Activated CD4-positive, alpha-beta T cell treated with anti-CD3 and anti-CD28 coated beads for 36 hours (primary cell): ENCODE measurements at regions of chr7 and their contacts with region 1.

Region 1: DNA sequence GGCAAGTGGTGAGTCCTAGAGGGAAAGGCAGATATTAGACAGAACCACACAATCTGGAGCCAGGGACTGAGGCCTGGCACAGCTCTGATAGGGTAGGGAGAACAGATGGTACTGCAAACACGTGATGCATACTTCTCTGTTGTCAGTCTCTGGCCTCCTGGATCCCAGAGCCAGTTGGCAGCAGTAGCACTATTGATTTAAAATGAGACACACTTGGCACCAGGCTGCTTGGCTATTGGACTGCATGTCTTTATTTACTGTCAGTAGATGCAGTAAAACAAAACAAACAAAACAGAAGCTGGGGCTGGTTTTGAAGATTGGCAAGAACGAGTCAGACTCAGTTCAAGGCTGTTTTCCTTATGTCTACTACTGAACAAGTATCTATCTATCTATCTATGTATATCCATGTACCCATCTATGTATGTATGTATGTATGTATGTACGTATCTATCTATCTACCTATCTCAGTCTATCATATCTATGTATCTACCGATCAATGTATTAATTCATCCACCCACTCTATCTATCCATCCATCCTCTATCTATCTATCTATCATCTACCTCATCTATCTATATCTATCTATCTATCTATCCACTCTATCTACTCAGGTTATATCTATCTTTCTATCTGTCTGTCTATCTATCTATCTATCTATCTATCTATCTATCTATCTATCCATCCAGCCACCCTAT is 23.4 kb upstream of the MGAM2 start:
- DNase-seq: no peak
- ATAC-seq: no peak
- H3K4me3 Mint-ChIP-seq: no peak overlapping the region
- H3K27ac Mint-ChIP-seq: no peak overlapping the region
- H3K4me1 Mint-ChIP-seq: no peaks in the 10 kb centered on the region
- H3K27me3 Mint-ChIP-seq: no peaks in the 10 kb centered on the region

Region 2: GRCh38 chr7:142060936-142061335 is 27.2 kb before region 1 on chr7:
- CTCF ChIA-PET with region 1: no interaction called
- POLR2A ChIA-PET with region 1: no interaction called
- intact Hi-C with region 1: loop called (anchors 1 kb)
- DNase-seq: no peak
- ATAC-seq: no peak
- H3K4me3 Mint-ChIP-seq: no peak overlapping the region
- H3K27ac Mint-ChIP-seq: no peak overlapping the region
- H3K4me1 Mint-ChIP-seq: no peaks in the 10 kb centered on the region
- H3K27me3 Mint-ChIP-seq: peaks cover 10% of the 10 kb centered on the region

Region 3: DNA sequence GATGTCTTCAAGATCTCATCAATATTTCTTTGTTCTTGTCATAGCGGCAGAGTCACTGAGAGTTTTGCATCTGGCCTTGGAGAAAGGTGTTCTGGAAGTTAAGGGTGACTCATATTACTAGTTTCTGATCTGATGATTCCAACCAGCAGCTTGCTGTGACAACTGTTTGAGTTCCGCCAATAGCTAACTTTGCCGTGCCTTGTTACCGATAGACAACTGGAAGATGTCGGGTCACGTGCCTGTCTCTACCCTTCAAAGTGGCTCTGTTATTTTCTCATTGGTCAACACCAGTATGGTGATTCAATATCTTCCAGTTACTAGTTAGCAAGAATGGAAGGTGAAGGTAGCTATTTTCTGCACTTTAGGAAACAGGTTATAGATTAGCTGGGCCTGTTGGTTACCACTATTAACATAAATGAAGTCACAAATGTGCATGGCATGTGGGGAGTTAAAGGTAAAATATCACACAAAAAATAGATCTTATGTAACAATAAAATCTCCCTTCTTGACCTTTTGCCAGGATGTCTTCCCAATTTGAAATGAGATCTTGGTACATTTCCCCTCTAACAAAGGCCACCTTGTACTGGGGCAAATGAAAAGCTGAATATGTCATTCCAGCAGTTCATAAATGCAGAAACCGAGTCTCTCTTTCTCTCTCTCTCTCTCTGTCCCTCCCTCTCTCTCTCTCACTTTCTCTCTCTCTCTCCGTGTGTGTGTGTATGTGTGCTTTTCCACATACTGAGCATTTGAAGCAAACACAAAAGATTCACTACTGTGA is 20.7 kb after region 1 on chr7:
- CTCF ChIA-PET with region 1: no interaction called
- POLR2A ChIA-PET with region 1: no interaction called
- intact Hi-C with region 1: no loop called
- DNase-seq: no peak
- ATAC-seq: no peak
- H3K4me3 Mint-ChIP-seq: no peak overlapping the region
- H3K27ac Mint-ChIP-seq: no peak overlapping the region
- H3K4me1 Mint-ChIP-seq: no peaks in the 10 kb centered on the region
- H3K27me3 Mint-ChIP-seq: peaks cover 9% of the 10 kb centered on the region